ENCODE measurements at regions of chr7 and their contacts with region 1.

Region 1: GRCh38 chr7:151900986-151901621 is 24.2 kb upstream of the PRKAG2 start:
- DNase-seq: no peak
- H3K4me3 ChIP-seq: no peak overlapping the region
- H3K27ac ChIP-seq: no peak overlapping the region
- H3K4me1 ChIP-seq: no peaks in the 10 kb centered on the region
- H3K27me3 ChIP-seq: no peaks in the 10 kb centered on the region
- CTCF ChIP-seq: no peak

Region 2: GRCh38 chr7:151863386-151864079 is 37.6 kb before region 1 on chr7:
- CTCF ChIA-PET with region 1: no interaction called
- dilution Hi-C with region 1: loop called (anchors 5 kb)
- in situ Hi-C with region 1: no loop called
- intact Hi-C with region 1: no loop called
- DNase-seq: no peak
- H3K4me3 ChIP-seq: no peak overlapping the region
- H3K27ac ChIP-seq: no peak overlapping the region
- H3K4me1 ChIP-seq: no peaks in the 10 kb centered on the region
- H3K27me3 ChIP-seq: peaks cover 2% of the 10 kb centered on the region
- CTCF ChIP-seq: peak; percentile 2 to 12

Region 3: GRCh38 chr7:151971829-151972228 is 70.7 kb after region 1 on chr7:
- CTCF ChIA-PET with region 1: no interaction called
- dilution Hi-C with region 1: loop called (anchors 5 kb)
- in situ Hi-C with region 1: no loop called
- intact Hi-C with region 1: no loop called
- DNase-seq: no peak
- H3K4me3 ChIP-seq: no peak overlapping the region
- H3K27ac ChIP-seq: no peak overlapping the region
- H3K4me1 ChIP-seq: no peaks in the 10 kb centered on the region
- H3K27me3 ChIP-seq: no peaks in the 10 kb centered on the region
- CTCF ChIP-seq: no peak